ENCODE measurements at regions of chr10 and their contacts with region 1.

Region 1: DNA sequence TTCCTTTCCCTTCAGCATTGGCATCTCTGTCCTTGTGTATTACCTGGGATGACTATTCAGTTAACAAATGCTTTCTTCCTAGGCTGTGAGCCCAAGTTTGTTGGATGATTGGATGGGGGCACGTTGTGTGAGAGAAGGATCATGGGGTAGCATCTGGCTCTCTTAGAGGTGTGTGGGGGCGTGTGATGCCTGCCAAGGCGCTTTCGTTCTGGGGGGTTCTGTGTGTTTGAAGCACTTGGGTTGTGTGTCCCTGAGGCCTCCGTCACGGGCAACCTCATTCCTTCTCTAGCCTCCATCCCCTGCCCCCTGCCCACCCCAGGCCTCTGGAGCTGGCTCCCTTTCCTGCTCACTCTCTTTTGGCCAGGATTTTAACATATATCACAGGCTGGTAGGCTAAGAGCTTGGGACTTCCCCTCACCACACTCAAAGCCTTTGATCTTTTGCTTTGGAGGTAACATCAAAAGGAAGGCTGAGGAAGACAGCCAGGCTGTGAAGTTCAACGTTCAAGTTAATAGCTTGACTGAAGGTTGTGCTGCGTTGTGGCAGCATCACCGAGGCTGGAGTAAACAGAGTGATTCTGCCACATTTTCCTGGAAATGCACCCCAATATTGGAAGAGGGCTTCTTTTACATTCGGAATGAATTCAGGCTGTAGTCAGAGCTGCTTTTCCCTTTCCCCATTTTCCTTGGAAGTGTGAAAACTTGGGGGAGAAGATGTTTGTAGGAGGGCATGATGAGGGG is 57.2 kb downstream of the TCF7L2 start:
- DNase-seq: peak; percentile 81
- H3K4me3 Mint-ChIP-seq: no peak overlapping the region
- H3K27ac Mint-ChIP-seq: no peak overlapping the region
- H3K4me1 Mint-ChIP-seq: peaks cover 13% of the 10 kb centered on the region
- H3K27me3 Mint-ChIP-seq: peaks cover 78% of the 10 kb centered on the region

Region 2: DNA sequence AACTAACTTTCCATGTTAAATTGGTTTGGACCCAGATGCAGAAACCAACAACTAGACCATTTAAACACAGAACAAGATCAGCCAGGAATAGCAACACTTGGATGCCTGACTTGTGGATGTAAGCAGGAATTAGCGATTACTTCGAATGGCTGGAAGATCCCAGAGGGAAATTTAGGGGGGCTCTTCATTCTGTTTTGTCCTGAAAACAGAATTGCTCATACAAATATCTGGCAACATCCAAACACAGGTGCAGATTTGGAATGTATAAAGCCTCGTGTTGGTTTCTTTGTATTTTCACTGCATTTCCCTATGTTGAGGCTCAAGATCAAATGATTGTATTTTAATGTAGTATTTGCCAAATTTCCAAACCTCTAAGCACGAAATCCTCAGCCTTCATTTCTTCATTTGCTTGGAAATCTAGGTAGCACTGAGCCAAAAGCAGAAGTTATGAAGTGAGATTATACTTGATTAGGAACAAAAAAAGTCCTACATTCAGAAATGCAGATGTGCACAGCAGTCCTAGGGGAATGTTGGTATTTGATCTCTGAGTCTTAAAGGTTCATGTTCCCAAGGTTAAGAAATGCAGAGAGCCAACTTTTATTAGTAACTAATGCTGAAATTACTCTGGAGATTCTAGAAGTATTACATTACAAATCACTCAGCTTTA is 305.9 kb before region 1 on chr10:
- intact Hi-C with region 1: no loop called
- DNase-seq: no peak
- H3K4me3 Mint-ChIP-seq: no peak overlapping the region
- H3K27ac Mint-ChIP-seq: no peak overlapping the region
- H3K4me1 Mint-ChIP-seq: no peaks in the 10 kb centered on the region
- H3K27me3 Mint-ChIP-seq: no peaks in the 10 kb centered on the region

Region 3: GRCh38 chr10:112981553-112981952 is 25.6 kb before region 1 on chr10:
- intact Hi-C with region 1: loop called (anchors 2 kb)
- DNase-seq: peak; percentile 67
- H3K4me3 Mint-ChIP-seq: no peak overlapping the region
- H3K27ac Mint-ChIP-seq: peak overlapping the region; percentile 52
- H3K4me1 Mint-ChIP-seq: peaks cover 9% of the 10 kb centered on the region
- H3K27me3 Mint-ChIP-seq: peaks cover 75% of the 10 kb centered on the region

Region 4: DNA sequence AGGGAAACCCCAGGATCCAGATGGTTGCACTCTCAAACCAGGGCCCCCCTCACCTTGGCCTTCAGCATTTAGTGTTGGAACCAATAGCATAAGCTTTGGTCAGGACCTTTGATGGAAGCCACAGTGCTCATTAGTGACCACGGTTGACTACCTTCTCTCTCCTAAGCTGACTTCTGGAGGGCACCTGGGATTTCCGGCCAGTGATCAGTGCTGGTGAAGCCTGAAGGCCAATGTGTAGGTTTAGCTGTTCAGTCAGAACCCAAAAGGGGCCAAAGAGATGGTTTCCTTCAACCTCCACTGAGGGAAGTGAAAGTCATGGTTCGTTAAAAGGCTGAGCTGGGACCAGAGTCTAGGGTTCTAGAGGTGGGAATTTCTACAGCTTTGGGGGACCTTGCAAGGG is 10.7 kb before region 1 on chr10:
- intact Hi-C with region 1: no loop called
- DNase-seq: no peak
- H3K4me3 Mint-ChIP-seq: no peak overlapping the region
- H3K27ac Mint-ChIP-seq: no peak overlapping the region
- H3K4me1 Mint-ChIP-seq: no peaks in the 10 kb centered on the region
- H3K27me3 Mint-ChIP-seq: peaks cover 56% of the 10 kb centered on the region

Region 5: GRCh38 chr10:113020838-113021237 is 13.6 kb after region 1 on chr10:
- intact Hi-C with region 1: no loop called
- DNase-seq: no peak
- H3K4me3 Mint-ChIP-seq: no peak overlapping the region
- H3K27ac Mint-ChIP-seq: no peak overlapping the region
- H3K4me1 Mint-ChIP-seq: no peaks in the 10 kb centered on the region
- H3K27me3 Mint-ChIP-seq: peaks cover 11% of the 10 kb centered on the region